H1 (cell line): ENCODE measurements at regions of chr5 and their contacts with region 1.

Region 1: DNA sequence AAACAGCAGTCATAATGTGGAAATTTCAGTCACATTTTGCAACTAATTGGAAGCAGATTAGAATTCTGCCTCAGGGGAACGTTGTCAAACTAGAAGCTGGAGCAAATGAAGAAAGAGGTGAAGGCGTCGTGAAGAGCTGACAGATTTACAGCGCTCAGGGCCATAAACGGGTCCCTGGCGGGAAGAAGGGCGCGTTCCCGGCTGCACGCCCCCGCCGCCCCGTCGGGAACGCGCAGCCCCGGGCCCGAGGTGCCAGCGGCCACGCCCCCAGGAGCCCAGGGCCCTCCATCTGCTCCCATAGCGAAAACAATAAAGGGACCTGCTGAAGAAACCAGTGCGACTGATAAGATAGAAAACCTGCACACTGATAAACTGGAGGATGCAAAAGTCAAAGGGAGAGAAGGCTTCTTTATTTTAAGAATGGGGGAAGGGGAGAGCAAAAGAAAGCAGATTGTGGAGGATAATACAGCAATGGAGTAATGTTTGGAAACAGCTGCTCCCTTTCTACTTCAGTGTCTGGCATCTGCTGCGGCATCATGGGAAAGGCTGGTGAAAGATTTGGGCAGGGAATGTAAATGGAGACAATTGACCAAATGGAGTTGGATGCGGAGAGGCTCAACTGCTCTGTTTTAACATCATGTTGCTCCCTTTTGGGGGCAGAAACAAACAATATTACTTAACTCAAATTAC is 11.1 kb downstream of the ZNF608 start:
- DNase-seq: peak in 1 of 2 experiments; percentile 76
- H3K4me3 ChIP-seq: peak overlapping the region in 1 of 4 experiments; percentile 40; a peak in 2 of 8 replicates
- H3K27ac ChIP-seq: 0 out of 2 replicates have a peak overlapping the region, but pooled peaks have one; percentile 19
- H3K4me1 ChIP-seq: peaks cover 9 to 47% (median 29%) of the 10 kb centered on the region in 4 experiments
- H3K27me3 ChIP-seq: no peaks in the 10 kb centered on the region
- CTCF ChIP-seq: no peak
- EP300 ChIP-seq: no peak
- POLR2A ChIP-seq: no peak
- RAD21 ChIP-seq: no peak; a peak in 1 of 4 replicates

Region 2: DNA sequence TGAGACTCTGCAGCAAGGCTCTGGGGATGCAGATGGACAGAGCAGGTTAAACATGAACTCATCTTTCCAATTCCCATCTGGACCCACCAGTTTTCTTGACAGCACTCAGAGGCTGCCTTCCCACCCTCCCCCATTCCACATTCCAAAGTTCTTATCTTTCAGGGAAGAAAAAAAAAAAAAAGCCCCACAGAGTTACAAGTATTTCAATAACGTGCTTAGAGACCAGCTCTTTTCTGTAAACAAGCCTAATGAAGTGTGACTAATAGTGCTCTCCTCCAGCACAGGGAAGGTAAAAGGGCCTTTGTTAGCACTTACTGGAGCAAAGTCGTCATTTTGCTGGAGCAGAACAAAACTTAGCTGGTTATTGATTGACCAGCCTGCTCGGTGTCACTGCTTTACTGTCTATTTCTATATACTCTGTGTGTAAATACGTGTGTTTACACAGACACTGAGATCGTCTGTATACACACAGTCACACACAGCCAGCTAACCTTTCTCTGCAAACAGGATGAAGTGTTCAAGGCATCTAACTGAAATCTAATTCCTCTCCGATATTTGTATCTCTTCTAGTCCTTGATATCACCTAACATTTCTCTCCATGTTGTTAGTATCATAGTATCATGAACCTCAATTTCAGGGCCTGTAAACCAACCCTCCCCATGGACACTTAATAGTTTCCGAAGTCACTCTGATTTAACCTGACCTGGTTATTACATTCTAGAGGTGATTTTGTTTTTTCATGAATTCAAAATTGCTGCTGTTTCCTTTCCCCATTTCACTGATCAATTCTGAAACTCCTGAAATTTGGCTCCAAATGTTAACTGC is 73.8 kb before region 1 on chr5:
- CTCF ChIA-PET with region 1: interaction called, 5 read pairs
- POLR2A ChIA-PET with region 1: interaction called, 12 read pairs
- DNase-seq: peak in 1 of 2 experiments; percentile 58
- H3K4me3 ChIP-seq: peak overlapping the region in 1 of 4 experiments; percentile 36; a peak in 1 of 8 replicates
- H3K27ac ChIP-seq: no peak overlapping the region
- H3K4me1 ChIP-seq: peaks cover 14 to 47% (median 42%) of the 10 kb centered on the region in 4 experiments
- H3K27me3 ChIP-seq: no peaks in the 10 kb centered on the region; a peak in 1 of 7 replicates
- CTCF ChIP-seq: no peak
- EP300 ChIP-seq: peak in 1 of 2 experiments; percentile 85; a peak in 1 of 3 replicates
- POLR2A ChIP-seq: no peak
- RAD21 ChIP-seq: no peak

Region 3: DNA sequence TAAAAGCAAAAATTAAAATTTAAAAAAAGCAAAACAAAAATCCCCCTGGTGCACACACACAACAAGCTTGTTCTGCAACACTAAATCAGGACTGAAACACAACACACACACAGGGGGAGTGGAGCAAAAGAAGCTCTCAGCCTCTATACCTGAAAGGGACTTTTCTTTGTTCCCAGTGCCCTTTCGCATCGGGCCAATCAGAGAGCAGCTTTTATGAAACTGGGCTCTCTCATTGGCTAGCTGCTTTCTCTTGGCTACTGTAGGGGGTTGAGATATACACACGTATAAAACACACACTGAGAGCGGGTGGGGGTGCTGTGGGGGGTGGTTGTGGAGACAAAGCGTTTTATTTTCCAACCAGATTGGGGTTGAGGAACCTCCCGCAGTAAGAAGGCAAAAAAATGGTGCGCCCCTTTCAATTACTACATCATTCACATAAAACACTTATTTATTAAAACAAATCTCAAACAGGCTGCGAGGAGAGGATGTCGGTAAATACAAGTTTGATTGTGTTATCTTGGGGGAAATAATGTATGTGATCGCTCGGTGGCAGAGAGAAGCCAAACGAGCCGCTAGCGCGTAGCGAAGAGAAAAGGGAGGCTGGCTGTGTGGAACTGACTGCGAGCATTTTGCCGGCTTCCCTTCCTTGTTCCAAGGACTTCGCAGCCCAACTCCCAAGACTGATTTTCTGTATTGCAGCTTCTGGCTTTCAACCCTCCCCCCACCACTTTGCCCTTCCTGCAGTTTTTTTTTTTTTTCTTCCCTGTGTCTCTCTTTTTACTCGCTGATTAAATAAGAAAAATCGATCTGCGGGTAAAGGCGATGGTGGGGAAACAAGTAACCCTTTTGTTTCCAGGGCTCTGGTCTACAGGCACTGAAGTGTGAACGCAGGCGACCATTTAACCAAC is 13.6 kb after region 1 on chr5:
- CTCF ChIA-PET with region 1: interaction called, 4 read pairs
- POLR2A ChIA-PET with region 1: interaction called, 74 read pairs
- DNase-seq: peak in 1 of 2 experiments; percentile 73
- H3K4me3 ChIP-seq: peak overlapping the region; percentile 68 to 94 (median 88)
- H3K27ac ChIP-seq: peak overlapping the region; percentile 93
- H3K4me1 ChIP-seq: peaks cover 3 to 21% (median 10%) of the 10 kb centered on the region in 4 experiments
- H3K27me3 ChIP-seq: no peaks in the 10 kb centered on the region
- CTCF ChIP-seq: no peak
- EP300 ChIP-seq: no peak
- POLR2A ChIP-seq: peak; percentile 50 to 68
- RAD21 ChIP-seq: peak; percentile 15 to 24; a peak in 1 of 4 replicates